ENCODE measurements at regions of chr1 and their contacts with region 1.

Region 1: GRCh38 chr1:30919025-30919881 is 10.7 kb upstream of the SDC3 start:
- DNase-seq: no peak
- H3K4me3 ChIP-seq: no peak overlapping the region
- H3K27ac ChIP-seq: no peak overlapping the region
- H3K4me1 ChIP-seq: no peaks in the 10 kb centered on the region
- H3K27me3 ChIP-seq: peaks cover 0 to 2% of the 10 kb centered on the region in 2 experiments
- CTCF ChIP-seq: no peak
- POLR2A ChIP-seq: no peak

Region 2: DNA sequence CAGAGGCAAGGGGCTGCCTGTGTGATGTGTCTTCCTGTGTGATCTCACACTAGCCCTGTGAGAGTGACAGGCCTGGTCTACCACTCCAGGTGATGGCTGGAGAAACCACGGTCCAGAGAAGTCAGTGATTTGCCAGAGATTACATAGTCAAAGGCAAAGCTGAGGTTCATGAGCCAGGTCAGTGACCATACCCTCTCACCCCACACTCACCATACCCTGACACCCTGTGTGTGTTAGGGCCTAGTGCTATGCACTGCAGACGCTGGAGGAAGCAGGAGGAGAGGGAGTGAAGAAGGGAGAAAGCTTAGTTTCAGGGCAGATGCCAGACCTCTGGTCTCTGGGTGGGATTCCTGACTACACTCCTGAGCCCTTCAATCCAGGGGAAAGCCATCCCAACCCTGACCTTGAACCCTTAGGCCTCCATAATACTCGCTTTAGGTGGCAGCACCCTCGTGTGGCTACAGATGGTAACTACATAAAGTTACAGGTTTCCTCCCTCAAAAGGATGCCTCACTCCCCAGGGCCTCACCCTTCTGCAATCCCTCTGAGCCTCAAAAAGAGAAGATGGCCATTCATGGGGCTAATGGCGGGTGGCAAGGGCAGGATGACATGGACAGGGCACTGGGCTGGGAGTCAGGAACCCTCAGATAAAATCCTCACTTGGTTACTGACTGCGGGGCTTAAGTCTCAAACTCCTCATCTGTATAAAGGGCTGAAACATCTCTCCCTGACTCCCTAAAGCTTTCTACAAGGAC is 10.1 kb after region 1 on chr1:
- CTCF ChIA-PET with region 1: interaction called, 10 read pairs
- POLR2A ChIA-PET with region 1: no interaction called
- dilution Hi-C with region 1: no loop called
- intact Hi-C with region 1: no loop called
- DNase-seq: peak; percentile 55
- H3K4me3 ChIP-seq: no peak overlapping the region
- H3K27ac ChIP-seq: no peak overlapping the region
- H3K4me1 ChIP-seq: no peaks in the 10 kb centered on the region
- H3K27me3 ChIP-seq: no peaks in the 10 kb centered on the region
- CTCF ChIP-seq: peak; percentile 64 to 71
- POLR2A ChIP-seq: no peak

Measured in endothelial cell of umbilical vein (primary cell).